Right ventricle myocardium superior (tissue), 1 donor: ENCODE measurements at regions of chr2 and their contacts with region 1.

Region 1: DNA sequence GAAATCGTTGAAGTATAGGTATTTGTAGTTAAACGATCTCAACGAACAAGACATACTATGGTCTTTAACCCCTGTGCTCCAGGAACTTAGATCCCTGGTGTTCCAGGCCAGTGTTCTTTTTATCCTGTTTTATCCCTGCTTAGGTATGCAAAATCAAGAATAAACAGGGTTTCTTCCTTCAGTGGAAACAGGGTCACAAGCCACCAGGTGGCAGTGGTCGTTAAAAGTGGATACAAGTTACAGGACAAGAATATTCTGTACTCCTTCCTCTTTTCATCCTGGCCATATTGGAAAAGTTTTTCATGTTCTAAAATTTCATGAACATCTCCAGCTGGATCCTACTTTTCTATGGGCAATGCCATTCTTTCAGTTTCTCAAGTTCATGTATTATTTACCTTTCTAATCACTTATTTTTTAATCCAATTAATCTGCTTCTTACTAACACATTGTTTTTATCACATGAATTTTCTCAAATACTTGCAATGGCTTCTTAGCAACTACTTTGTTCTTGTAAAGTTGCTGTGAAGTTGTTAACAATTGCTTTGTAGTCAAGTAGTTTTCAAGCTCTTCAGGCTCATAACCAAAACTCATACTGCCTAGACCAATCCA is 16.4 kb upstream of the HNMT start:
- DNase-seq: peak; percentile 85
- ATAC-seq: peak; percentile 87

Region 2: GRCh38 chr2:137776697-137777096 is 171.1 kb before region 1 on chr2:
- intact Hi-C with region 1: no loop called
- DNase-seq: no peak
- ATAC-seq: no peak

Region 3: DNA sequence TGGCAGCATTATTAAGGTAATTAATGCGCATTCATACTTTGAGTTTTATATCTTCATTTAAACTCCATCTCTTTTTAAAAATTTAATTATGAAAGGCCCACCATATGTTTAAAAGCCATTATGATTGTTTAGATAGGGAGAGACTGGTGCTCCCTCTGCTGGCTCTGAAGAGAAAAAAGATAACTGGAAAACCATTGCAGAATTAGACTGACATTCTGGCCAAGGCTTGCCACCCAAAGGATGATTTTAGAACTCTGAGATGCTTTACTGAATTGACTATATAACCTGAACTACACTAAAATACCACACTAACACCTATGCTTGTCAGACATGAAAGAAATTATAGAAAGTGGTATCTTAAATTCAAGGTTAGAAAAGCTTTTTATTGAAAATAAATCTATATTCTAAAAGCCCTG is 426.2 kb after region 1 on chr2:
- intact Hi-C with region 1: loop called (anchors 5 kb)
- DNase-seq: no peak
- ATAC-seq: no peak

Region 4: DNA sequence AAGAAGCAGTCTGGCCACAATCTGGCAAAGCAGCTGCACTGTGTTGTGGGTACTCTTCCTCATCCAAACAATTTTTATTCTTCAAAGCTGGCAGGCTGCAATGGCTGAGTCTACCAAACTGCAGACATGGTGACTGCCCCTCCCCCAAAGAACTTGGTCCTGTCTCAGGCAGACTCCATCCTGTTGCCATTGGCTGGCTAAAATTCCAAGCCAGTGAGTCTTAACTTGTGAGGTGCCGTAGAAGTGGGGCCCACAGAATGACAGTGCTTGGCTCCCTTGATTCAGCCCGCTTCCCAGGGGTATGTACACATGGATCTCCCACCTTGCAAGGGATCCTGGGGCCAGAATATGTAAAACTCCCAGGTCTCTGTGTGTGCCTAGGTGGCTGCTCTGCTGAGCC is 846.9 kb after region 1 on chr2:
- intact Hi-C with region 1: loop called (anchors 5 kb)
- DNase-seq: no peak
- ATAC-seq: no peak